Heart left ventricle (tissue), 16 donors: ENCODE measurements at regions of chr3 and their contacts with region 1.

Region 1: DNA sequence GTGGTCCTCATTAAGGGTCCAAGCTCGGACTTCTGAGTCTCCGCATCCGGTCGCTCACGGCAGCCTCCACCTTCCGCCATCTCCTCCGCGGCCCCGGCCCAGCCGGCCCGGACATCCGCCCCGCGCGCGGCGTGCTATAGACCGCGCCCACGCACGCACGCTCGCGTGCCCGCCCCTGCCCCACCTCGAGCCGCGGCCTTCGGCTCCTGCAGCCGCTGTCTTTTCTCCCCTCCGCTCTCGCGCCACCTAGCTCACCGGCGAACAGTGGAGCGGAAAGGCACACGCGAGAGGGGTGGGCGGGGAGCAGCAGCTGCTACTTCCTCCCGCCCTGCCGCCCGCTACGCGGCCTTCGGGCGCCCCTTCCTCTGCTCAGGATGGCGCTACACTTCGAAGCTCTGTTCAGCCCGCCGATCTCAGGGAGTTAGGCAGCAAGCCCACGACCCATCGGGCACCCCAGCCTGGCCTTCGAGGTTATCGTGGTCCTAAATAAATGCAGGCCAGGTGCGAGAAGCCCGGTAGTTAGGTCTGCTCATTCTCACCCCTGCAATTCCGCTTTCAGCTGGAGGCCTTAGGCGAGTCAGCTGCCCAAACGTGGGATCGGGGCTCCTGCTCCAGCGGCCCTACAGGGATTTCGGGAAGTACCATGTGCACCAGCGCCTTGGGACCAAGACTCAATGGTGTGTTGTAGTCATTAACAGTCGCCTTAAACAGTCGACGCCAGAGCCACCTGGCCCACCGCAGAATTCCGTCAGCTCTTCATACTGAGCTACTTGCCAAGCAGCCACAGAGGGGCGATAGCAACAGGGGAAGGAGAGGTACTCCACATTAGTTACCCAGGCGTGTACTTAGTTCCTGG is at the start of gene USP4:
- DNase-seq: peak; percentile 93 to 96 (median 94)
- ATAC-seq: peak; percentile 90 to 98 (median 96)
- H3K4me3 ChIP-seq: peak within 1 kb of the TSS; percentile 64 to 96 (median 82)
- H3K27ac ChIP-seq: peak within 1 kb of the TSS; percentile 83 to 98 (median 95)
- H3K4me1 ChIP-seq: peaks cover 0 to 80% (median 21%) of the 10 kb centered on the region in 12 donors
- H3K27me3 ChIP-seq: no peaks in the 10 kb centered on the region
- CTCF ChIP-seq: peak; percentile 20 to 78 (median 28)
- POLR2A ChIP-seq: peak in 1 of 2 donors; percentile 69
- total RNA-seq, gene USP4: 17.3 to 48.6 (median 37.2) TPM

Region 2: GRCh38 chr3:49007068-49007770 is 333.0 kb before region 1 on chr3 and contains the start of gene WDR6:
- intact Hi-C with region 1: no loop called
- DNase-seq: peak; percentile 95 to 98 (median 98)
- ATAC-seq: peak; percentile 90 to 94 (median 92)
- H3K4me3 ChIP-seq: peak within 1 kb of the TSS; percentile 62 to 94 (median 77)
- H3K27ac ChIP-seq: peak within 1 kb of the TSS; percentile 70 to 99 (median 94)
- H3K4me1 ChIP-seq: peaks cover 0 to 21% (median 16%) of the 10 kb centered on the region in 12 donors
- H3K27me3 ChIP-seq: no peaks in the 10 kb centered on the region
- CTCF ChIP-seq: peak in 10 of 12 donors; percentile 36 to 70 (median 50)
- POLR2A ChIP-seq: peak in 1 of 2 donors; percentile 77
- total RNA-seq, gene WDR6: 56.2 to 91.2 (median 80.7) TPM

Region 3: DNA sequence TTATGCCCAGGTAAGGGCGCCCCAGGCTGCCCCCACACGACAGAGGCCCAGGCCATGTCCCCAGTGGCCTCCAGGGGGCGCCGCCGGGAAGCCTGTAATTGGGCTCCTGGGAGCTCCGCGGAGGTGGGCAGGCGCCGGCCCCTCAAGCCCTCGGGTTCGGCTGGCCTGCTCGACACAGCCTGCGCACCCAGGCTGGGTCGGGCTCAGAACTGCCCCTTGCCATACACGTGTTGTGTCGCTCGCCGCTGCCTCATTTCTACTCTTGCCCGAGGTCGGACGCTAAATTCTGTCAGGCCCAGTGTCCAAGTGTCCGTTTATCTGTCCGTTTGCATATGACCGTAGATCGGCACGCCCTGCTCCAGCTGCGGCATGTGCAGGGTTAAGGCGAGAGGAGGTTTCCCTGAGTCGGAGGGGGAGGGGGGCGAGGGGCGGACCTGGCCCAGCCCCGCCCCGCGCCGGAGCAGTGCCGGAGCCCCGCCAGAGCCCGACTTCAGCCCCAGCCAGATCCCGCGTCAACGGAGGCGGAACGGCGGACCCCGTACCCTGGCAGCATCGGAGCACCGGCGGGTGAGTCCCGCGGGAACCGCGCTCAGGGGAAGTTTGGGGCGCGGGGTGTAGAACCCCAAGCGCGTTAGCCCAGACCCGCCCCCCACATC is 168.9 kb before region 1 on chr3 and contains the start of gene KLHDC8B:
- intact Hi-C with region 1: loop called in 7 of 10 experiments (anchors 2 to 5 kb)
- DNase-seq: peak; percentile 92 to 94 (median 93)
- ATAC-seq: peak; percentile 83 to 91 (median 88)
- H3K4me3 ChIP-seq: peak within 1 kb of the TSS; percentile 47 to 98 (median 92)
- H3K27ac ChIP-seq: peak within 1 kb of the TSS; percentile 79 to 99 (median 96)
- H3K4me1 ChIP-seq: peaks cover 13 to 62% (median 51%) of the 10 kb centered on the region in 12 donors
- H3K27me3 ChIP-seq: no peaks in the 10 kb centered on the region
- CTCF ChIP-seq: peak; percentile 95 to 98 (median 96)
- POLR2A ChIP-seq: peak in 1 of 2 donors; percentile 81
- total RNA-seq, gene KLHDC8B: 96.9 to 138 (median 112) TPM

Region 4: GRCh38 chr3:49238274-49239127 is 101.7 kb before region 1 on chr3:
- intact Hi-C with region 1: no loop called
- DNase-seq: peak in 3 of 5 donors; percentile 29 to 41 (median 39)
- ATAC-seq: peak; percentile 86 to 94 (median 88)
- H3K4me3 ChIP-seq: no peak overlapping the region
- H3K27ac ChIP-seq: peak overlapping the region; percentile 20 to 86 (median 66)
- H3K4me1 ChIP-seq: peaks cover 0 to 22% (median 11%) of the 10 kb centered on the region in 12 donors
- H3K27me3 ChIP-seq: no peaks in the 10 kb centered on the region
- CTCF ChIP-seq: no peak
- POLR2A ChIP-seq: peak in 1 of 2 donors; percentile 9

Region 5: GRCh38 chr3:49283997-49284396 is 56.2 kb before region 1 on chr3:
- intact Hi-C with region 1: no loop called
- DNase-seq: no peak
- ATAC-seq: no peak
- H3K4me3 ChIP-seq: no peak overlapping the region
- H3K27ac ChIP-seq: no peak overlapping the region
- H3K4me1 ChIP-seq: peaks cover 0 to 10% (median 7%) of the 10 kb centered on the region in 12 donors
- H3K27me3 ChIP-seq: no peaks in the 10 kb centered on the region
- CTCF ChIP-seq: no peak
- POLR2A ChIP-seq: no peak

Region 6: GRCh38 chr3:49358217-49358883 is 18.2 kb after region 1 on chr3 and contains the start of gene GPX1:
- intact Hi-C with region 1: loop called in 1 of 10 experiments (anchors 1 kb)
- DNase-seq: peak; percentile 96 to 98 (median 97)
- ATAC-seq: peak; percentile 94 to 98 (median 96)
- H3K4me3 ChIP-seq: peak within 1 kb of the TSS; percentile 60 to 92 (median 84)
- H3K27ac ChIP-seq: peak within 1 kb of the TSS; percentile 84 to 96 (median 91)
- H3K4me1 ChIP-seq: peaks cover 3 to 47% (median 26%) of the 10 kb centered on the region in 12 donors
- H3K27me3 ChIP-seq: no peaks in the 10 kb centered on the region
- CTCF ChIP-seq: no peak
- POLR2A ChIP-seq: peak; percentile 60 to 98
- total RNA-seq, gene GPX1: 86.3 to 341 (median 124) TPM

Region 7: GRCh38 chr3:49411968-49412631 is 71.9 kb after region 1 on chr3 and contains the starts of genes RHOA and TCTA:
- intact Hi-C with region 1: loop called in 5 of 10 experiments (anchors 2 to 5 kb)
- DNase-seq: peak; percentile 99 to 100 (median 100)
- ATAC-seq: peak; percentile 95 to 97 (median 96)
- H3K4me3 ChIP-seq: peak within 1 kb of the TSS; percentile 67 to 99 (median 86)
- H3K27ac ChIP-seq: peak within 1 kb of the TSS; percentile 91 to 99 (median 98)
- H3K4me1 ChIP-seq: peaks cover 7 to 79% (median 50%) of the 10 kb centered on the region in 12 donors
- H3K27me3 ChIP-seq: no peaks in the 10 kb centered on the region
- CTCF ChIP-seq: no peak
- POLR2A ChIP-seq: peak; percentile 90 to 96
- total RNA-seq, gene RHOA: 224 to 479 (median 291) TPM
- total RNA-seq, gene TCTA: 13.2 to 25.3 (median 16.7) TPM

Region 8: DNA sequence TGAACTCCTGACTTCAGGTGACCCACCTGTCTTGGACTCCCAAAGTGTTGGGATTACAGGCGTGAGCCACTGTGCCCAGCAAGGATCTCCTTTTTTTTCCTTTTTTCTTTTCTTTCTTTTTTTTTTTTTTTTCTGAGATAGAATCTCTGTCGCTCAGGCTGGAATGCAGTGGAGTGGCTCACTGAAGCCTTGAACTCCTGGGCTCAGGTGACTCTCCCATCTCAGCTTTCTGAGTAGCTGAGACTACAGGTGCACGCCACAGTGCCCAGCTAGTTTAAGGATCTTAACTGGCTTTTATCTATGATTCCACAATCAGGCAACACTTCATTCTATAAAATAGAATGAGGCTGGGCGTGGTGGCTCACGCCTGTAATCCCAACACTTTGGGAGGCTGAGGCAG is 105.2 kb after region 1 on chr3:
- intact Hi-C with region 1: loop called (anchors 1 to 5 kb)
- DNase-seq: no peak
- ATAC-seq: no peak
- H3K4me3 ChIP-seq: no peak overlapping the region
- H3K27ac ChIP-seq: peak overlapping the region in 1 of 12 donors; percentile 82
- H3K4me1 ChIP-seq: peaks cover 0 to 34% (median 6%) of the 10 kb centered on the region in 12 donors
- H3K27me3 ChIP-seq: no peaks in the 10 kb centered on the region
- CTCF ChIP-seq: no peak
- POLR2A ChIP-seq: no peak

Region 9: DNA sequence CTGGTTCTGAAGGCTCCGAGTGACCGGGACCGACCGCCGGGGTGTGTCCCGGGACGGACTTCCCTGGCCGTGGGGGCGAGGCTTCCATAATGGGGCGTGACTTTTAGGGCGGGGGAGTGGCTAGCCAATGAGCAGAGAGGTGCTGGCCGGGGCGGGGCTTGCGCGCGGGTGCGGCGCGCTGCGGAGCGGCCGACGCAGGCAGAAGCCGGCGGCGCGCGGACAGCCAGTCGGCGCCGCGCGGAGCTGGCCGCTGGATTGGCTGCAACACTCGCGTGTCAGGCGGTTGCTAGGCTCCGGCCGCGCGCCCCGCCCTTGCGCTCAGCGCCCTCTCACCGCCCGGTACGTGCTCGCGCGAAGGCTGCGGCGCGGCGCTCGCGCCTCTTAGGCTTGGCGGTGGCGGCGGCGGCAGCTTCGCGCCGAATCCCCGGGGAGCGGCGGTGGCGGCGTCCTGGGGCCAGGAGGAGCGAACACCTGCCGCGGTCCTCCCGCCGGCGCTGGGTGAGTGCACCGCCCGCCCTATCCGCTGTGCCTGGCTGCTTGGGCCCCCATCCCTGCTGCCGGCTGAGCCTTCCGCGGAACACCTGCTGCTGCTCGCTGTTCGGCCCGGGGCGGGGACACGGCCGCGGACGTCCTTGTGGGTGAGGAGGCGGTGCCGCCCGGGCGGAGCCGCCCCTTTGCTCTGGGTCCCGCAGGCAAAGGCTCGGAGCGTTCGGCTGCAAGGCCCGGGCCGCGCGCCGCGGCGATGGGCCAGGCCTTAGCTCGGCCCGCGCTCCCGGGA is 130.0 kb after region 1 on chr3 and contains the start of gene DAG1:
- intact Hi-C with region 1: loop called in 1 of 10 experiments (anchors 1 kb)
- DNase-seq: peak; percentile 99
- ATAC-seq: peak; percentile 87 to 95 (median 91)
- H3K4me3 ChIP-seq: peak within 1 kb of the TSS; percentile 68 to 94 (median 84)
- H3K27ac ChIP-seq: peak within 1 kb of the TSS; percentile 91 to 100 (median 98)
- H3K4me1 ChIP-seq: peaks cover 12 to 55% (median 40%) of the 10 kb centered on the region in 12 donors
- H3K27me3 ChIP-seq: no peaks in the 10 kb centered on the region
- CTCF ChIP-seq: no peak
- POLR2A ChIP-seq: peak; percentile 56 to 88
- total RNA-seq, gene DAG1: 122 to 218 (median 141) TPM